PC-3 (cell line): ENCODE measurements at regions of chr15 and their contacts with region 1.

Region 1: DNA sequence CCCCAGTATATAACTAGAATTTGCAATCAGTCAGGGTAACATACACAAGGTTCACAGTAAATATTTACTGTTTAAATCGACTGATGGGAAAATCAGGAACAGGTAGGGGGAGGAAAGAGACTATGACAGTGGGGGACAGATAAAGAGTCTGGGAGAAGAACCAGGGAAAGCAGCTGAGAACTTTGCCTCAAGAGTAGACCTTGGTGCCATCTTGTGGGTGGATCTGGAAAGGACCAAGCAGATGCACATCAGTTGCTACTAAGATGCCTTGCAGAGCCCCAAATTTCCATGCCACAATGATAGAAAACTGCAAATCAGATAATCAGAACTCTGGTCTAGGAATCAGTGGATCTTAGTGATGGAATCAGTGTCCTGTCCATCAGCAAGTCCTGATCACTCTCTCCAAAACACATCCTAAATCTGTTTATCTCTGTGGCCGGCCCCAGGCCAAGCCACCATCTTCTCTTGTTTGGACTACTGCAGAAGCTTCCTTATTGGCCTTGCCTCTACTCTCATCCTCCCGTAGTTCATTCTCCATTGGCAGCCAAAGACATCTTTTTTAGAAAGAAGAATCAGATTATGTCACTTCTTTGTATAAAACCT is 62.7 kb downstream of the PDE8A start:
- DNase-seq: peak; percentile 69
- ATAC-seq: peak; percentile 26
- H3K4me3 ChIP-seq: no peak overlapping the region
- H3K27ac ChIP-seq: 0 out of 2 replicates have a peak overlapping the region, but pooled peaks have one; percentile 98
- H3K4me1 ChIP-seq: peaks cover 51% of the 10 kb centered on the region
- H3K27me3 ChIP-seq: no peaks in the 10 kb centered on the region
- CTCF ChIP-seq: peak; percentile 74

Region 2: DNA sequence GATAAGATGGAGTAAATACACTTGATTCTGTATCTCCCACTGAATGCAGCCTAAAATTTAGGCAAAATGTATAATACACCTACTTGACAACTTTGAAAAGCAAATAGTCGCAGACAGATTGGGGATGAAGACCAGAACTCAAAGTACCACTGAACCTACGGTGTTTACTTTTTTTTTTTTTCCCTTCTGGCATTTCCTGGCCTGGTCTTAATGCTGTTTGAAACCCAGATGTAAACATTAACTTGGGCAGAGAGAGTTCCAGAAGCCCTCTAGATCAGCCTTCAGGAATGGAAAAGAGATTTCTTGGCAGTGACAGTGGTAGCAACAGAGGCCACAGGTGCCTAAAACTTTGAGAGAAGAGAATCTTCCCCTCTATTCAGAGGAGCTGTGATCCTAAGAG is 199.4 kb before region 1 on chr15:
- CTCF ChIA-PET with region 1: no interaction called
- POLR2A ChIA-PET with region 1: no interaction called
- intact Hi-C with region 1: loop called (anchors 5 kb)
- DNase-seq: no peak
- ATAC-seq: no peak
- H3K4me3 ChIP-seq: no peak overlapping the region
- H3K27ac ChIP-seq: no peak overlapping the region
- H3K4me1 ChIP-seq: peaks cover 17% of the 10 kb centered on the region
- H3K27me3 ChIP-seq: no peaks in the 10 kb centered on the region
- CTCF ChIP-seq: no peak

Region 3: GRCh38 chr15:84955089-84955848 is 89.1 kb before region 1 on chr15:
- CTCF ChIA-PET with region 1: interaction called, 12 read pairs
- POLR2A ChIA-PET with region 1: no interaction called
- intact Hi-C with region 1: loop called (anchors 1 kb)
- DNase-seq: peak; percentile 76
- ATAC-seq: peak; percentile 98
- H3K4me3 ChIP-seq: peak overlapping the region; percentile 48
- H3K27ac ChIP-seq: no peak overlapping the region
- H3K4me1 ChIP-seq: peaks cover 14% of the 10 kb centered on the region
- H3K27me3 ChIP-seq: no peaks in the 10 kb centered on the region
- CTCF ChIP-seq: peak; percentile 85

Region 4: DNA sequence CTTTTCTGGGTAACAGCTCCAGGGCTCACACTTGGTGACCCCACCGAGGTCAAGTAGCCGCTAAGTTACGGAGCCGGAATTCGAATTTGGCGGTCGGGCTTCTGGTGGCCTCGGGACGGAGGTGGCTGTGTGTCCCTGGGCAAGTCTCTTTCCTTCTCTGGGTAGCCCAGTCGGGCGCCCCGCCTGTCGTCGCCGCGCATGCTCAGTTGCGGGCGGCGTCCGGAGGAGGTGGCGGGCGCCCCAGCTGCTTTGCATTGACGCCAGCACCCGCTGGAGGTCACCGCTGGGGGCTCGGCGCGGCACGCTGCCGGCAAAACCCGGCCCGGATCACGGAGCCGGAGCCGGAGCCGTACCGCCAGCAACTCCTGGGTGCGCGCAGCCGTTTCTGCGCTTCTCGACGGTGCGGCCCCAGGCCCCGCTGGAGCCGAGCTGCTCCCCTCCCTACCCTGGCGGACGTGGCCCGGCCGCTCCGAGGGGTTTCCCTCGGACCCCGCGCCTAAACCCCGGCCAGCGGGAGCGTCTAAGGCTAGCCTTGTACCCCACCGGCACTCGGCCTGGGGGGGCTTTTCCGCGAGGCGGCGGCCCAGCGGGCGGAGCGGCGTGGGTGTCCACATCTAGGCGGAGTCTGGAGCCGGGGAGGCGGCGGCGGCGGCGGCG is 63.2 kb before region 1 on chr15:
- CTCF ChIA-PET with region 1: interaction called, 3 read pairs
- POLR2A ChIA-PET with region 1: interaction called, 3 read pairs
- intact Hi-C with region 1: loop called (anchors 1 kb)
- DNase-seq: peak; percentile 97
- ATAC-seq: peak; percentile 69
- H3K4me3 ChIP-seq: peak overlapping the region; percentile 92
- H3K27ac ChIP-seq: peak overlapping the region; percentile 87
- H3K4me1 ChIP-seq: peaks cover 26% of the 10 kb centered on the region
- H3K27me3 ChIP-seq: no peaks in the 10 kb centered on the region
- CTCF ChIP-seq: no peak

Region 5: GRCh38 chr15:85137489-85138168 is 93.3 kb after region 1 on chr15:
- CTCF ChIA-PET with region 1: no interaction called
- POLR2A ChIA-PET with region 1: no interaction called
- intact Hi-C with region 1: no loop called
- DNase-seq: no peak
- ATAC-seq: no peak
- H3K4me3 ChIP-seq: no peak overlapping the region
- H3K27ac ChIP-seq: no peak overlapping the region
- H3K4me1 ChIP-seq: peaks cover 14% of the 10 kb centered on the region
- H3K27me3 ChIP-seq: no peaks in the 10 kb centered on the region
- CTCF ChIP-seq: no peak